Caco-2 (cell line): ENCODE measurements at regions of chr3 and their contacts with region 1.

Region 1: GRCh38 chr3:185677146-185677829 is 91.2 kb downstream of the SENP2 start:
- DNase-seq: peak in 1 of 2 experiments; percentile 69
- H3K4me3 ChIP-seq: no peak overlapping the region
- H3K4me3 Mint-ChIP-seq: no peak overlapping the region
- H3K27ac Mint-ChIP-seq: no peak overlapping the region
- H3K4me1 ChIP-seq: no peaks in the 10 kb centered on the region
- H3K4me1 Mint-ChIP-seq: no peaks in the 10 kb centered on the region
- H3K27me3 ChIP-seq: no peaks in the 10 kb centered on the region
- H3K27me3 Mint-ChIP-seq: no peaks in the 10 kb centered on the region
- CTCF ChIP-seq: peak; percentile 67 to 76

Region 2: DNA sequence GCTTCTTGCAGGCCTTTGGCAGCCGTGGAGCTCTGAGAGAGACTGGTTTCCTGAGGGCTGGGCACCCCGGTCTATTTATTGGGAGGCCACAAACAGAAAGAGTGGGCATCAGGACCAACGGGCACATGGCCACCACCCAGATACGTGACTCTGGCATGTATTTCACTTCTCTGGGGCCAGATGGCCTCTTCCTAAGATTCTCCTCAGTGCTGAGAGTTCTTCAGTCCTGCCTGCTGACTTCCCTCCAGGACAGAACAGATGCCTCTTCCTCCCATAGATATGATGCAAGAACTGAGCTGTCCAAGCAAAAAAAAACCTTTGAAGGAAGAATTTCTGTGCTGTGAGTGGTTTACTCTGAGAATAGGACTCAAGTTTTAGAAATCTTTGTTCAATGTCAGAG is 39.8 kb after region 1 on chr3:
- CTCF ChIA-PET with region 1: interaction called, 3 read pairs
- POLR2A ChIA-PET with region 1: no interaction called
- intact Hi-C with region 1: loop called (anchors 5 kb)
- DNase-seq: no peak
- H3K4me3 ChIP-seq: no peak overlapping the region
- H3K4me3 Mint-ChIP-seq: no peak overlapping the region
- H3K27ac Mint-ChIP-seq: peak overlapping the region; percentile 23
- H3K4me1 ChIP-seq: peaks cover 63% of the 10 kb centered on the region
- H3K4me1 Mint-ChIP-seq: peaks cover 64% of the 10 kb centered on the region
- H3K27me3 ChIP-seq: no peaks in the 10 kb centered on the region
- H3K27me3 Mint-ChIP-seq: no peaks in the 10 kb centered on the region
- CTCF ChIP-seq: no peak

Region 3: DNA sequence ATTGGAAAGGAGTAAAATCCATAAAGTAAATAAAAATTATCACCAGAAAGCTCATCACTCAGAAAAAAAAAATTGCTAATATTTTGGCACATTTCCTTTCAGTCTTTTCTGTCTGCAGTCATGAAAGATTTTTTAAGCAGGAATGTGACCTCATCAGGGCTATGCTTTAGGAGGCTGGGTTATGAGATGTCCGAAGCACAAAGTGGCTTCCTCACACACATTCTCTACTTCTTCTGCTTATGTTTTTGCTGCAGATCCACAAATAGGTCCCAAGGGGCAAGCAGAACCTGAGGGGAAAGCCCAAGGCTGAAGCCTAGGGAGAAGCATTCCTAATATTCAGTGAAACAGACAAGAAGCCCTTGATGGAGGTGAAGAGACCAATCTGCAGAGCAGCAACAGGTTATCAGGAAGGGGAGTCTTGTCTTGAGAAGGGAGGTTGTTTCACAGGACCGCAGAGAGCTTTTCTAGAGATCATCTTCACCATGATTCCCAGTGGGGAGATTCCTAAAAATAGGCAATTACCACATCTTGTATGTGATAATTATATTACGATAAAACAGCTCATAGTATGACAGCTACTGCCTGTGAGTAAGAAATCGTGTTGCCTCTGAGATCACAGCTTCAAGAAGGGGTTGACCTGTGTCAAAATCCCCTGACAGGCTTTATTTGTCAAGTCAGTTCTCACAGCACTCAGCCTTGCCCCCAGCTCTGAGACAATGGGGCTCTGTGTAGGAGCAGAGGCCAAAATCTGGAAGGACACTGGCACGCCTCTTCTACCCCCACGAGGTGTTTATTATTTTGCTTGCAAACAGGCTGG is 87.1 kb after region 1 on chr3:
- CTCF ChIA-PET with region 1: interaction called, 19 read pairs
- POLR2A ChIA-PET with region 1: no interaction called
- intact Hi-C with region 1: loop called (anchors 1 kb)
- DNase-seq: no peak
- H3K4me3 ChIP-seq: no peak overlapping the region
- H3K4me3 Mint-ChIP-seq: no peak overlapping the region
- H3K27ac Mint-ChIP-seq: no peak overlapping the region
- H3K4me1 ChIP-seq: no peaks in the 10 kb centered on the region
- H3K4me1 Mint-ChIP-seq: peaks cover 19% of the 10 kb centered on the region
- H3K27me3 ChIP-seq: no peaks in the 10 kb centered on the region
- H3K27me3 Mint-ChIP-seq: no peaks in the 10 kb centered on the region
- CTCF ChIP-seq: no peak

Region 4: GRCh38 chr3:185959609-185960517 is 282.6 kb after region 1 on chr3:
- CTCF ChIA-PET with region 1: no interaction called
- POLR2A ChIA-PET with region 1: no interaction called
- intact Hi-C with region 1: no loop called
- DNase-seq: no peak
- H3K4me3 ChIP-seq: no peak overlapping the region
- H3K4me3 Mint-ChIP-seq: no peak overlapping the region
- H3K27ac Mint-ChIP-seq: no peak overlapping the region
- H3K4me1 ChIP-seq: no peaks in the 10 kb centered on the region
- H3K4me1 Mint-ChIP-seq: no peaks in the 10 kb centered on the region
- H3K27me3 ChIP-seq: no peaks in the 10 kb centered on the region
- H3K27me3 Mint-ChIP-seq: no peaks in the 10 kb centered on the region
- CTCF ChIP-seq: no peak